ENCODE measurements at regions of chr21 and their contacts with region 1.

Region 1: GRCh38 chr21:29091032-29091431 is 17.6 kb upstream of the CCT8 start:
- DNase-seq: no peak

Region 2: GRCh38 chr21:29024474-29025327 is 66.3 kb before region 1 on chr21 and contains the start of gene USP16:
- intact Hi-C with region 1: no loop called
- DNase-seq: peak; percentile 92 to 99 (median 94)

Region 3: DNA sequence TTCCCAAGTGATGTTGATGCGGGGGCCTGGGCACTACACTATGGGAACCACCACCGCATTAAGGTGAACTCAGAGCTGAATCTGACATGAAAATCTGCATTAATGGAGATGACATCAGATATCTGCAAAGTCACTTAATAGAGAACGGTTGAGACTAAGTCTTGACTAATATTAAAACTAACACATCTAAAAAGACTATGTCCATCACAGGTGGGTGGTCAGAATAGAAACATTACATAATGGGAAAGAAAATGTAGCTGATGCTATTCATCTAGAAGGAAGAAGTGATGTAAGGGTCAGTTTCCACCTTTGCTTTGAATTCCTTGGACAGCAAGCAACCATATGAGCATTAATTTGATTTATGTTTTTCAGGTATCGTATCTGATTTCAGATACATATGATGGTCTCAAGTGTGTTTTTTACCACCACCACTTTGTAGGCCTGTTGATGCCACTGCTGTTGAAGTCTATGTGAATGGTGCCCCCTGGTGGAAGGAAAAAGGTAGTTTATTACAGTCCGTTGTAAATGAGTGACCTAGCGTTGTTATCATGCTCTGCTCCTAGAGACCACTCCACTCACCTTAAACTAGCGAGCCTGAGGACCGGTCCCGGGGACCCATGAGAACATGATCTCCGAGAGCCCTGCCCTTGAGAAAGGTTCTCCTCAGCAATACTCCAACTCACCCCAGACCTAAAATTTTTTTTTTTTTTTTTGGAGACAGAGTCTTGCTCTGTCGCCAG is 281.2 kb after region 1 on chr21:
- intact Hi-C with region 1: loop called (anchors 2 kb)
- DNase-seq: peak in 2 of 10 donors; percentile 31 to 53

Measured in posterior cingulate gyrus (tissue), 11 donors.